Mammary epithelial cell (primary cell): ENCODE measurements at regions of chr1 and their contacts with region 1.

Region 1: DNA sequence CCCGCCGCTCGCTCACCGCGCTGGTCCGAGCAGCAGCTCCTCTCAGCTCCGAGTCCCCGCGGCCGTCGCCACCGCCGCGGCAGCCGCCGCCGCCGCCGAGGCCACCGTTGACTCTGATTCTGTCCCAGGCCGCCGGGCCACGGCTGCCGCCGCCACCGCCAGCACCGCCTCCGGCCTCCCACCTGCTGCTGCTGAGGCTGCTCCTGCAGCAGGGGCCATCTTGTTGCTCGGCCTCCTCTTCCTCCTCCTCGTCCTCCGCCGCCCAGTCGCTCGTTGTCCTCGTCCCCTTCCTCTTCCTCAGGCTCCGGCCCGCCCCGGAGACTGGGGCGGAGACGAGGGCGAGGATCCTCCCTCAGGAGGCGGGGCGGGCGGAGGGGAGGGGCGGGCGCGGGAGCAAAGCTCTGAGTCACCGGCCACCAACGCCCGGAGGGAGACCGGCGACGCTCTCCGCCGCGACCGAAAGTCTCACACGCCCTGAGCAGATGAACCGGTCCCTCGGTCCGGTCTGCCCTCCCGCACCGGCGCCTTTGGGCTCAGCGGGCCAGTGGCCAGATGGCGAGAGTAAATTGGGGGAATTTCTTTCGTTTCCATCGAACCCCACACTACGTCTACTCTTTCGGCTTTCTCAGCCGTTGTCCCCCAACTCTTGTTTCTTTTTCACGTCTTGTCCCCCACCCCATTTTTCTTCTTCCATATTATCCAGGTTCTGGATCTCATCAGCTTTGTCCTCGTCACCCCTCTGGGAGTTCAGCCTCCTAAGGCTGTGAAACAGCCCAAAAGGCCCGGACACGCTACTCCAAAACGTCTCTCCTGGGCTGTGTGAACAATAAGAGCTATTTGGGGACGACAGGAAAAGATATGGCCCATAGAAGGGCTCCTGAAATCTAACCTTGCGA is at the start of gene RC3H1:
- DNase-seq: peak; percentile 89
- H3K4me3 ChIP-seq: peak within 1 kb of the TSS; percentile 87 to 98 (median 93)
- H3K27ac ChIP-seq: peak within 1 kb of the TSS; percentile 83
- H3K4me1 ChIP-seq: peaks cover 26% of the 10 kb centered on the region
- H3K27me3 ChIP-seq: no peaks in the 10 kb centered on the region
- CTCF ChIP-seq: no peak
- total RNA-seq, gene RC3H1: 22.0 to 36.5 TPM

Region 2: GRCh38 chr1:173616859-173617258 is 405.5 kb before region 1 on chr1:
- CTCF ChIA-PET with region 1: no interaction called
- dilution Hi-C with region 1: no loop called
- in situ Hi-C with region 1: no loop called
- intact Hi-C with region 1: no loop called
- DNase-seq: no peak
- H3K4me3 ChIP-seq: no peak overlapping the region
- H3K27ac ChIP-seq: no peak overlapping the region
- H3K4me1 ChIP-seq: no peaks in the 10 kb centered on the region
- H3K27me3 ChIP-seq: no peaks in the 10 kb centered on the region
- CTCF ChIP-seq: no peak

Region 3: GRCh38 chr1:173853074-173853473 is 169.3 kb before region 1 on chr1:
- CTCF ChIA-PET with region 1: no interaction called
- dilution Hi-C with region 1: no loop called
- in situ Hi-C with region 1: no loop called
- intact Hi-C with region 1: no loop called
- DNase-seq: no peak
- H3K4me3 ChIP-seq: no peak overlapping the region
- H3K27ac ChIP-seq: no peak overlapping the region
- H3K4me1 ChIP-seq: no peaks in the 10 kb centered on the region
- H3K27me3 ChIP-seq: no peaks in the 10 kb centered on the region
- CTCF ChIP-seq: no peak

Region 4: GRCh38 chr1:173946380-173946921 is 75.9 kb before region 1 on chr1:
- CTCF ChIA-PET with region 1: no interaction called
- dilution Hi-C with region 1: no loop called
- in situ Hi-C with region 1: no loop called
- intact Hi-C with region 1: no loop called
- DNase-seq: peak; percentile 79
- H3K4me3 ChIP-seq: no peak overlapping the region
- H3K27ac ChIP-seq: peak overlapping the region; percentile 25
- H3K4me1 ChIP-seq: peaks cover 7% of the 10 kb centered on the region
- H3K27me3 ChIP-seq: no peaks in the 10 kb centered on the region
- CTCF ChIP-seq: no peak

Region 5: DNA sequence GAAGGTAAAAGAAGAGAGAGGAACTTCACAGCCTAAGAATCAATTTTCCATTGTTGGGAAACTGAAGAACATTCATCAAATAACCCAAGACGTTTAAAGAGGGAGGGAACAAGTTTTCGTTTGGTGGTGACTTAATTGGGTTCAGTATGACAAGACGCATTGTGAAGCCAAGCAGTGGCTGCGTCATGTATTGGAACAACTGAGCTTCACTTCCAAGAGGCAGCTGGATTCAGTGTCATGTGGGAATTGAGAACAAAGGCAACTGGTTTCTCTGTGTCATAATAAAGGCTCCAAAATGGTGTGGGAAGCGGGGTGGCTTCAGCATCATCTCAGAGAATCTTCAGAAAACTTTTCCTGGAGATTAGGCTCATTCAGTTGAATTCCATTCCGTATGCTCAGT is 29.6 kb after region 1 on chr1:
- CTCF ChIA-PET with region 1: interaction called, 11 read pairs
- dilution Hi-C with region 1: no loop called
- in situ Hi-C with region 1: no loop called
- intact Hi-C with region 1: no loop called
- DNase-seq: no peak
- H3K4me3 ChIP-seq: no peak overlapping the region
- H3K27ac ChIP-seq: no peak overlapping the region
- H3K4me1 ChIP-seq: no peaks in the 10 kb centered on the region
- H3K27me3 ChIP-seq: no peaks in the 10 kb centered on the region
- CTCF ChIP-seq: no peak

Region 6: GRCh38 chr1:174074757-174075156 is 52.4 kb after region 1 on chr1:
- CTCF ChIA-PET with region 1: no interaction called
- dilution Hi-C with region 1: no loop called
- in situ Hi-C with region 1: no loop called
- intact Hi-C with region 1: no loop called
- DNase-seq: no peak
- H3K4me3 ChIP-seq: no peak overlapping the region
- H3K27ac ChIP-seq: no peak overlapping the region
- H3K4me1 ChIP-seq: no peaks in the 10 kb centered on the region
- H3K27me3 ChIP-seq: no peaks in the 10 kb centered on the region
- CTCF ChIP-seq: peak; percentile 28 to 42

Region 7: DNA sequence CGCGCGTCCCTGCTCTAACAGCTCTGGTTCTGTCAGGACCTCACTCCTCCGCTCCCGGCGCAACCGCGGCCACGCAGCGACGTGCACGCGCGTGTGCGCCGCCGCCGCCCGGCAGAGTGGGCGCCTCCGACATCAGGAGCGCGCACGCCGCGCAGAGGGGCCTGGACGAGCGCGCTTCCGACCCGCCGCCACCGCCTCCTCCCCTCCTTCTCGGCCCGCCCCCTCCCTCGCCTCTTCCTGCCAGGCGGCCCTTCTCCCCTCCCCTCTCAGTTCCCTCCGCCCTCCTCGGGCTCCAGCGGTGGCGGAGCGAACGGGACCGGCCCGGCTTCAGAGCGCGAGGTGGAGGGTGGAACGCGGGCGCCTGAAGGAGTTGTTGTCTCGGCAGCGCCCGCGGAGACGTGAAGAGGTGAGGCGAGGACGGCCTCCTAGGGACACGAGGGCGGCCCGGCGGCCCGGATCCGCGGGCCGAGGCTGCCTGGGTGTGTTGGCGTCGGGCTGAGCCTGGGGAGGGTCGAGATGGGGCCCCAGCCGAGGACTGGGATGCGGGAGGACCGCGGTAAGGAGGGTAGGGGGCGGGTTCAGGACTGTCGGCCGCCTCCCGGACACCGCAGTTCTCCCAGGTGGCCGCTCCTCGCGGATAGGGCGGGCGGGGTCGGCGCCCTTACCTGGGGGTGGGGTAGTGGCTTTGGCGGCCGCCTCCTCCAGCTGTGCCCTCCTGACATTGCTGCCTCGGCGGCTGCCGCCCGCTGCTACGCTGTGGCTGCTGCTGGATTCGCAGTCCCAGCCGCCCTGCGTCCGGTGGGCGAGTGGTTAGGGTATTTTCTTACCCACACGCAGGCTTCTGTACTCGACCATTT is 137.2 kb after region 1 on chr1 and contains the start of gene RABGAP1L:
- CTCF ChIA-PET with region 1: no interaction called
- dilution Hi-C with region 1: no loop called
- in situ Hi-C with region 1: no loop called
- intact Hi-C with region 1: loop called (anchors 5 kb)
- DNase-seq: peak; percentile 94
- H3K4me3 ChIP-seq: peak within 1 kb of the TSS; percentile 84 to 94 (median 91)
- H3K27ac ChIP-seq: peak within 1 kb of the TSS; percentile 78
- H3K4me1 ChIP-seq: peaks cover 34% of the 10 kb centered on the region
- H3K27me3 ChIP-seq: no peaks in the 10 kb centered on the region
- CTCF ChIP-seq: no peak
- total RNA-seq, gene RABGAP1L: 31.9 to 47.5 TPM